IMR-90 (cell line): ENCODE measurements at regions of chr10 and their contacts with region 1.

Region 1: DNA sequence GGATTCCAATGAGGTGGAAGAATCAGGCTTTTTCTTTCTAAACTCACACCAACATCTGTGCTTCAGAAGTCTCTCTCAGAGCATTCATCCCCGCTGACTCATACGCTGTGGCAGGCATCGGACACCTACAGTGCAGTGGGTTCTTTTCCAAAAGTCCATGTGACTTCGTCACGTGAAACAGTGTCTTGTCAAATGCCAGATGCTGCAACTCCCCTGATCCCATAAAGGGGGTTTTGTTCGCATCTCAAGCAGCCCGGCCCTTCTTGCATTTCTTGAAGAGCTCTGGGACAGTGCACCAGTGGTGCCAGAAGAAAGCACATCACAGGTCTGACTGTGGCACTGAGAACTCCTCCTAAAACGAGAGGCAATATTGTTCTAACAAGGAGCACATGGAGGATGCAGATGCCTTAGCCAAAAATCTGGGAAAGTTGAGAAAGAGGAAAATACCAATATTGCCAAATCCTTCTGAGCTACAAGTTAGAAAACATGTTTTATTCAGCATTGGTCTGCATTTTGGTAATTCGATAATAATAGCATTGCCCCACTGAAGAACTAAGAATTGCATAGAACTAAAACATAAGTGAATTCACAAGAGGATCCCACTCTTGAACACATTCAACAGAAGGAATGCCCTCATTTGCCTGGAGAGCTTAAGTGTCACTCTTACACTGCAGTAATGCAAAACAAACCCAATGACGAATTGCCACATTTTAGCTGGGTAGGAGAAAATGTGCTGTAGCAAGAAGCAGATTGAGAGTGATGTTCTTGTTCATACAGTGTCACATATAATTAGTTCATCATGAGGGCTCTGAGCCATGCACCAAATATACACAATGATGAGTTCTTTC is 204.4 kb downstream of the CXCL12 start:
- DNase-seq: peak; percentile 95
- ATAC-seq: peak; percentile 83
- H3K4me3 ChIP-seq: no peak overlapping the region
- H3K27ac ChIP-seq: no peak overlapping the region
- H3K4me1 ChIP-seq: peaks cover 7% of the 10 kb centered on the region
- H3K27me3 ChIP-seq: no peaks in the 10 kb centered on the region
- CTCF ChIP-seq: no peak
- POLR2A ChIP-seq: no peak
- RAD21 ChIP-seq: no peak

Region 2: GRCh38 chr10:43816351-43817321 is 363.9 kb before region 1 on chr10:
- CTCF ChIA-PET with region 1: no interaction called
- POLR2A ChIA-PET with region 1: no interaction called
- dilution Hi-C with region 1: no loop called
- in situ Hi-C with region 1: no loop called
- intact Hi-C with region 1: loop called (anchors 10 kb)
- DNase-seq: peak; percentile 72
- ATAC-seq: peak; percentile 55
- H3K4me3 ChIP-seq: no peak overlapping the region
- H3K27ac ChIP-seq: peak overlapping the region; percentile 32
- H3K4me1 ChIP-seq: peaks cover 7% of the 10 kb centered on the region
- H3K27me3 ChIP-seq: no peaks in the 10 kb centered on the region
- CTCF ChIP-seq: no peak
- POLR2A ChIP-seq: no peak
- RAD21 ChIP-seq: no peak

Region 3: DNA sequence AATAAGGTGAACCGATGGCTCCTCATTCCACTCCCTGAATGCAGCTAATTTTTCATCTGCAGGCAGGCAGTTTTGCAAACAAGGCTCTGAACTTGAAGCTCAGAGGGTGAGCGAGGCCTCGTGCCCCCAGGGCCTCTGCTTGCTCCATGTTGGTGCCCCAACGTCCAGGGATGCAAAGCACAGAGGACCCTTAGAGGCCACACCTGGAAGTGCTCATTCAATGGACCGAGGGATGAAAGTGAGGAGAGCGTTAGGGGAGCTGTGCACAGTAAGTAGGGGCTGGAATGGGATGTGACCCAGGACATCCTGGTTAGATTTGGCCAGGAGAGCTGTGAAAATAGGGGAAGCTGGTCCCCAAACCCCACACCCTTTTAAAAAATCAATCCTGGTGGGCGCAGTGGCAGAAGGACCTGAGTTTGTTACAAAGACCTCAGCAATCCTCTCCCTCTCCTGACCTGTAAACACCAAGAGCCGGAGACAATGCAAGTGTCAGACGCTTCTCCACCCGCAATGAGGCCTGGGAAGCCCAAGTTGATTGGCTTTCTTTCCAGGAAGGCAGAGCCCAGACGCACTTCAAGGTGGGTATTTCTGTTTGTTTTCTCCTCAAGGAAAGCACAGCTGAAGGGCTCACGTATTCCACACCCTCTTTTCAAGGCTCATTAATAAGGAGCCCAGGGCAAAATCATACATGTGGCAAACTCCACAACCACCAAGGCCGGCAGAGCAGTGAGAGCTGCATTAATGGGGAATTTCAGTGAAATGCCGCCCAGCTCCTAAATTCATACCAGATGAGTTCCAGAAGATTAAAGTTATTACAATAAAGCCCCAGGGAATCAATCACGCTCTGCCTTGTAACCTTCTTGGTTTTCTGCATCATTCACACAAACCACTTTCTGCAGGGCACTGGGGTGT is 218.5 kb after region 1 on chr10:
- CTCF ChIA-PET with region 1: no interaction called
- POLR2A ChIA-PET with region 1: no interaction called
- dilution Hi-C with region 1: no loop called
- in situ Hi-C with region 1: no loop called
- intact Hi-C with region 1: no loop called
- DNase-seq: no peak
- ATAC-seq: no peak
- H3K4me3 ChIP-seq: no peak overlapping the region
- H3K27ac ChIP-seq: no peak overlapping the region
- H3K4me1 ChIP-seq: no peaks in the 10 kb centered on the region
- H3K27me3 ChIP-seq: peaks cover 56% of the 10 kb centered on the region
- CTCF ChIP-seq: no peak
- POLR2A ChIP-seq: no peak
- RAD21 ChIP-seq: no peak